ENCODE measurements at regions of chr10 and their contacts with region 1.

Region 1: DNA sequence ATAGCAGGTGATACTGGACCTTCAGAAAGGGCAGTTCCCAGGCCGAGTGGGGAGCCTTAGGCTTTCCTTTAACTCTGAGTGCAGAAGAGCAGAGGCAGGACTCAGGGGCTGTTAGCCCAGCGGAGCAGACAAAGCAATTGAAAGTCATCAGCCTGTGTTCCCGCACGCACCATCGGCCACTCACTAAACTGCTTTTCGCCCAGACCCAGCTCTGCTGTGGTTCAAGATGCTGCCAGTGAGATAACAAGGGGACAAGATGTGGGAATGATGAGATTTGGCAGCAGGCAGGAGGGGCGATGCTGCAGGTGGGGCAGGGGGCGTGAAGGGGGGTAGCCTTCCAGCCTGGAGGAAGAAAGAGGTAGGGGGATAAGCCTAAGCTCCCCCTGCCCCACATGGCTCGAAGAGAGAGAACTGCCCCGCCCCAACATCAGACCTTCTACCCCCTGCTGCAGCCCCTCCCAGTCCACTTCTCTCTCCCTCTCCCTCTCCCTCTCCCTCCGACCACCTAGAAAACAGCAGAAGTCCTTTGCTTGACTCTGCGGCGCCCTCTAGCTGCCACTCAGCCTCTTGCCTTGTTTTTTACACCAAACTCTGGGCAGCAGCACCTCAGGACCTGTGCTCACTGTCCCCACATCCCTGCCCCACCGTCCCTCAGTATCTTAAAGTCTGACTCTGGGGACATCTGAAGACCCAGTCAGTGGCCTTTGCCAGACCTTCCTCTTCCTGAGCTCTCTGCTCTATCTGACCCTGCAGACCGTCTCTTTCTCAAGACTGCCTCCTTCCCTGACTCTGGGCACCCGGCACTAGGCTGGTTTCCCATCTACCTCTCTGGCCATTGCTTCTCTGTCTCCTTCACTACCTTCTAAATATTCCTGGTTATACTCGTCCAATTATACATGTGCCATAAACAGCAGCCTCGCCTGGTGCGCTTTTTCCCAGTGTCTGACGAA is 110.5 kb downstream of the C10orf105 start:
- DNase-seq: peak; percentile 83
- H3K4me3 ChIP-seq: no peak overlapping the region; a peak in 1 of 4 replicates
- H3K27ac ChIP-seq: no peak overlapping the region
- H3K4me1 ChIP-seq: peaks cover 6 to 17% of the 10 kb centered on the region in 2 experiments; a peak in 3 of 4 replicates
- H3K27me3 ChIP-seq: 0 out of 2 replicates have a peak, but pooled peaks cover 4% of the 10 kb centered on the region
- CTCF ChIP-seq: peak; percentile 81
- EP300 ChIP-seq: no peak
- RAD21 ChIP-seq: peak; percentile 83

Region 2: GRCh38 chr10:71302874-71303568 is 306.1 kb before region 1 on chr10:
- CTCF ChIA-PET with region 1: no interaction called
- POLR2A ChIA-PET with region 1: no interaction called
- DNase-seq: peak; percentile 61
- H3K4me3 ChIP-seq: no peak overlapping the region; a peak in 1 of 4 replicates
- H3K27ac ChIP-seq: no peak overlapping the region
- H3K4me1 ChIP-seq: no peaks in the 10 kb centered on the region; a peak in 1 of 4 replicates
- H3K27me3 ChIP-seq: no peaks in the 10 kb centered on the region
- CTCF ChIP-seq: peak; percentile 60
- EP300 ChIP-seq: no peak
- RAD21 ChIP-seq: peak; percentile 37; the same call in 1 of the 2 replicates

Region 3: GRCh38 chr10:71378336-71379117 is 230.6 kb before region 1 on chr10:
- CTCF ChIA-PET with region 1: interaction called, 57 read pairs
- POLR2A ChIA-PET with region 1: no interaction called
- DNase-seq: no peak
- H3K4me3 ChIP-seq: no peak overlapping the region
- H3K27ac ChIP-seq: no peak overlapping the region
- H3K4me1 ChIP-seq: peaks cover 0 to 3% of the 10 kb centered on the region in 2 experiments; a peak in 1 of 4 replicates
- H3K27me3 ChIP-seq: no peaks in the 10 kb centered on the region
- CTCF ChIP-seq: no peak
- EP300 ChIP-seq: no peak
- RAD21 ChIP-seq: no peak

Region 4: GRCh38 chr10:71396084-71396720 is 212.9 kb before region 1 on chr10:
- CTCF ChIA-PET with region 1: interaction called, 70 read pairs
- POLR2A ChIA-PET with region 1: no interaction called
- DNase-seq: peak; percentile 90
- H3K4me3 ChIP-seq: peak overlapping the region in 1 of 2 experiments; percentile 41; a peak in 2 of 4 replicates
- H3K27ac ChIP-seq: no peak overlapping the region
- H3K4me1 ChIP-seq: peaks cover 0 to 9% of the 10 kb centered on the region in 2 experiments; a peak in 1 of 4 replicates
- H3K27me3 ChIP-seq: peaks cover 48% of the 10 kb centered on the region
- CTCF ChIP-seq: no peak
- EP300 ChIP-seq: no peak
- RAD21 ChIP-seq: peak; percentile 83

Region 5: GRCh38 chr10:71597821-71598498 is 11.1 kb before region 1 on chr10:
- CTCF ChIA-PET with region 1: interaction called, 44 read pairs
- POLR2A ChIA-PET with region 1: interaction called, 5 read pairs
- DNase-seq: no peak
- H3K4me3 ChIP-seq: no peak overlapping the region
- H3K27ac ChIP-seq: no peak overlapping the region
- H3K4me1 ChIP-seq: no peaks in the 10 kb centered on the region
- H3K27me3 ChIP-seq: no peaks in the 10 kb centered on the region; the same call in 1 of the 2 replicates
- CTCF ChIP-seq: no peak
- EP300 ChIP-seq: no peak
- RAD21 ChIP-seq: no peak

Region 6: GRCh38 chr10:71647526-71648253 is 38.6 kb after region 1 on chr10:
- CTCF ChIA-PET with region 1: interaction called, 15 read pairs
- POLR2A ChIA-PET with region 1: no interaction called
- DNase-seq: peak; percentile 71
- H3K4me3 ChIP-seq: no peak overlapping the region
- H3K27ac ChIP-seq: no peak overlapping the region
- H3K4me1 ChIP-seq: peaks cover 0 to 20% of the 10 kb centered on the region in 2 experiments; a peak in 1 of 4 replicates
- H3K27me3 ChIP-seq: no peaks in the 10 kb centered on the region; the same call in none of the 2 replicates
- CTCF ChIP-seq: peak; percentile 45
- EP300 ChIP-seq: no peak
- RAD21 ChIP-seq: peak; percentile 37

Measured in SK-N-SH (cell line).